ENCODE measurements at regions of chr1 and their contacts with region 1.

Region 1: DNA sequence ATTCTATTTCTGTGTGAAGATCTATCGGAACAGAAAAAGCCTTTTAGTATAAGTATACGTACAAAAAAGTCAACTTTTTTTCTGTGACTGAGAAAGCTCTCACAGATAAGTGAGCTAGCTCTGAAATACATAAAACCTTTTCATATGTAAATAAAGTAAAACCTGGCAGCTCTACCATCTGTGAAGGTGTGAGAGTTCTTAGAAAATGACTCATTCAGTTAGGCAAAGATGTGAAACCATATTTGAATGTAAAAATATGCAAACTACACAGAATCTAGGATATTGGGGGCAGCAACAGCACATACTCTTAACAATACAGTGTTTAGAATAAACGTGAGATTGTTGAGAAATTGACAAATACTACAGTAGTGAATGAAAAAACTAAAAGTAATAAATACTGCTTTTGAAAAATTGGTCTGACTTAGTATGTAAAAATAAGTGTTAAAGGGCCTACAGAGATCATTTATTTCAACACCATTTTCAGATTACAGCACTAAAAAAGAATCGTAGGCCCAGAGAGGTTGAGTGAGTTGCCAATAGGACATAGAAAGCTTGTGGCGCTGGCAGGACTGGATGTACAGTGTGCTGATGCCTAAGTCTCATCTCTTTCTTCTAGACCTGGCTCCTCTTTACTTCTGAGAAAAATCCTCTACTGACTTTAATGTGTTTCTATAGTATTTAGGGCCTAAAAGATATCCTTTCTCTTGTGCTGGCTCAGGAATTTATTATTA is 19.8 kb downstream of the ATP6V1G3 start:
- DNase-seq: peak in 3 of 14 experiments; percentile 44 to 74 (median 50)
- ATAC-seq: peak; percentile 52
- H3K4me3 ChIP-seq: peak overlapping the region; percentile 38
- H3K4me3 Mint-ChIP-seq: peak overlapping the region; percentile 79
- H3K27ac ChIP-seq: peak overlapping the region; percentile 48 to 60
- H3K27ac Mint-ChIP-seq: peak overlapping the region; percentile 93
- H3K4me1 ChIP-seq: peaks cover 20% of the 10 kb centered on the region
- H3K4me1 Mint-ChIP-seq: peaks cover 82% of the 10 kb centered on the region
- H3K27me3 ChIP-seq: no peaks in the 10 kb centered on the region
- H3K27me3 Mint-ChIP-seq: no peaks in the 10 kb centered on the region
- CTCF ChIP-seq: no peak

Region 2: GRCh38 chr1:198167436-198167934 is 353.2 kb before region 1 on chr1:
- CTCF ChIA-PET with region 1: no interaction called
- POLR2A ChIA-PET with region 1: no interaction called
- intact Hi-C with region 1: loop called in 1 of 2 experiments (anchors 10 kb)
- DNase-seq: peak in 5 of 14 experiments; percentile 16 to 85 (median 63)
- ATAC-seq: peak; percentile 48
- H3K4me3 ChIP-seq: peak overlapping the region; percentile 24
- H3K4me3 Mint-ChIP-seq: peak overlapping the region; percentile 74
- H3K27ac ChIP-seq: peak overlapping the region; percentile 57 to 79
- H3K27ac Mint-ChIP-seq: peak overlapping the region; percentile 88
- H3K4me1 ChIP-seq: peaks cover 64% of the 10 kb centered on the region
- H3K4me1 Mint-ChIP-seq: peaks cover 91% of the 10 kb centered on the region
- H3K27me3 ChIP-seq: no peaks in the 10 kb centered on the region
- H3K27me3 Mint-ChIP-seq: no peaks in the 10 kb centered on the region
- CTCF ChIP-seq: no peak

Region 3: GRCh38 chr1:198612471-198613260 is 92.0 kb after region 1 on chr1:
- CTCF ChIA-PET with region 1: no interaction called
- POLR2A ChIA-PET with region 1: interaction called, 10 read pairs
- intact Hi-C with region 1: no loop called
- DNase-seq: peak in 3 of 14 experiments; percentile 57 to 78 (median 60)
- ATAC-seq: peak; percentile 45
- H3K4me3 ChIP-seq: peak overlapping the region; percentile 28
- H3K4me3 Mint-ChIP-seq: peak overlapping the region; percentile 79
- H3K27ac ChIP-seq: peak overlapping the region; percentile 71
- H3K27ac Mint-ChIP-seq: peak overlapping the region; percentile 98
- H3K4me1 ChIP-seq: peaks cover 50% of the 10 kb centered on the region
- H3K4me1 Mint-ChIP-seq: peaks cover 70% of the 10 kb centered on the region
- H3K27me3 ChIP-seq: no peaks in the 10 kb centered on the region
- H3K27me3 Mint-ChIP-seq: no peaks in the 10 kb centered on the region
- CTCF ChIP-seq: no peak

Region 4: DNA sequence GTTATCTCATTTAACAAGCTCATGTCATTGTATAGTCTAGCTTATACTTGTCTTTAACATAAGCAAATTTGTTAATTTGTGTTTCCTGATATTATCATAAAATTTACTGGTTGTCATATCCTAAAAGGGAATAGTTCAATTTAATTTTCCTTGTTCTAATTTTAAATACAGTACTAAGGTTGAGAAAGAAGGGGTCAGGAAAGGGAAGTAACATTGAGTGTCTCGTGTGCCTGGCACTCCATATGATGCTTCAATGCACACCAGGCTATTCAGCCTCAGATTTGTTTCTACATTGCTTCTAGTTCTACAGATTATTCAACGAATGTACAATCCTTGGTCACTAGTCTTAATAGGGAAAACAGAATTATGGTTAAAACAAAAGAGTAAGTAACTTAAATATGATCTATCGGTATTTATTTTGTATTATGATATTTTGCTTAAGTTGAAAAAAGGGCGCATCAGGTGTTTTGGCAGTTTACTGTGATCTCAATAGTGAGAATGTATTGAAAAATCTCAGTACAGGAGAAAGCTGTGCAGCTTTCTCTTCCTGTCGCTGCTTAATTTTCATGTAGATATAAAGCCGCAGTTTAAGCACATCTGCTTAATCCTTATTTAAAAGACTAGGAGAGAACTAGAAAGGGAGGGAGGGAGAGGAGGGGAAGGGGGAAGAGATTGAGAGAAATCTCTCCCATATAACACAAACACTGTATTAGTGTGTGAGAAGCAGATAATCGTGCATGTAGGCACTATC is 131.1 kb after region 1 on chr1:
- CTCF ChIA-PET with region 1: no interaction called
- POLR2A ChIA-PET with region 1: interaction called, 26 read pairs
- intact Hi-C with region 1: no loop called
- DNase-seq: peak in 1 of 14 experiments; percentile 46
- ATAC-seq: no peak
- H3K4me3 ChIP-seq: peak overlapping the region; percentile 79
- H3K4me3 Mint-ChIP-seq: peak overlapping the region; percentile 83
- H3K27ac ChIP-seq: peak overlapping the region; percentile 81 to 85
- H3K27ac Mint-ChIP-seq: peak overlapping the region; percentile 90
- H3K4me1 ChIP-seq: peaks cover 24% of the 10 kb centered on the region
- H3K4me1 Mint-ChIP-seq: peaks cover 76% of the 10 kb centered on the region
- H3K27me3 ChIP-seq: no peaks in the 10 kb centered on the region
- H3K27me3 Mint-ChIP-seq: no peaks in the 10 kb centered on the region
- CTCF ChIP-seq: no peak

Region 5: GRCh38 chr1:198693321-198693720 is 172.6 kb after region 1 on chr1:
- CTCF ChIA-PET with region 1: interaction called, 3 read pairs
- POLR2A ChIA-PET with region 1: interaction called, 15 read pairs
- intact Hi-C with region 1: no loop called
- DNase-seq: no peak
- ATAC-seq: peak; percentile 48
- H3K4me3 ChIP-seq: no peak overlapping the region
- H3K4me3 Mint-ChIP-seq: peak overlapping the region; percentile 70
- H3K27ac ChIP-seq: no peak overlapping the region
- H3K27ac Mint-ChIP-seq: peak overlapping the region; percentile 82
- H3K4me1 ChIP-seq: peaks cover 17% of the 10 kb centered on the region
- H3K4me1 Mint-ChIP-seq: peaks cover 88% of the 10 kb centered on the region
- H3K27me3 ChIP-seq: no peaks in the 10 kb centered on the region
- H3K27me3 Mint-ChIP-seq: no peaks in the 10 kb centered on the region
- CTCF ChIP-seq: no peak

Region 6: DNA sequence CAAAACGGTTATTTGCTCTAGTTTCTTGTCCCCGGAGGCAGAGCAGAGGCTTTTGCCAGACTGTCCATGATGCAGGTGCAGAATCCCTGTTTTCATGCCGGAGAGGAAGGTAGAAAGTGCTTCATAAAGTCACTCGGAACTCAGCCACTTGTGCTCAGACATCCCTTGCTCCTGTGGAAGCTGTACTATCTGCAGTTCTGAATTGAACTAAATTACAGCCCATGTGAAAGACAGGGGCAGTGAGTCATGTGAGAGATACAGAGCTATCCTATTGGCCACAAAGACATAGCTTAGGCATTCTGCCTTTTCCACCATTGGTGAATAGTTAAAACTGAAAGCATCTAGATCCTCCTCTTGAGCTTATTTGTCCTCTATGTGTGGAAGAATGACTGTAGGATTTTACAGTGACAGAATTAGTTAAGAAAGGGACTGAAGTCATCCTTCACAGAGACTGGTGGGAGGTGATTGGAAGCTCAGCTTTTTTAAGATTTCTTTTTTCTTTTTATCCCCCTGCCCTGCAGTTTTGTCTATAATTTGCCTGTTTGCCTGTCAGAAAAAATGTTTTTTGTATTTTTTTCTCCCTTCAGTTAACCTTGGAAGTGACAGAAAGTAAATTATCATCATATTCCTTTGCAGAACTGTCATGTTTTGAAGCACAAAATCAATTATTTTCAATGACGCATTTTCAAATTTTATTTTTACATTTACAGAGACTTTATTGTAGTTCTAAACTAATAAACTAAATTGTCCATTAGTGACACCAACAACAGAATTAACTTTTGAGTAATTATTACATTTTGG is 416.7 kb after region 1 on chr1:
- CTCF ChIA-PET with region 1: no interaction called
- POLR2A ChIA-PET with region 1: no interaction called
- intact Hi-C with region 1: loop called in 1 of 2 experiments (anchors 10 kb)
- DNase-seq: peak in 10 of 14 experiments; percentile 9 to 87 (median 25)
- ATAC-seq: peak; percentile 83
- H3K4me3 ChIP-seq: peak overlapping the region; percentile 69
- H3K4me3 Mint-ChIP-seq: peak overlapping the region; percentile 90
- H3K27ac ChIP-seq: peak overlapping the region; percentile 39 to 58
- H3K27ac Mint-ChIP-seq: no peak overlapping the region
- H3K4me1 ChIP-seq: peaks cover 8% of the 10 kb centered on the region
- H3K4me1 Mint-ChIP-seq: peaks cover 26% of the 10 kb centered on the region
- H3K27me3 ChIP-seq: no peaks in the 10 kb centered on the region
- H3K27me3 Mint-ChIP-seq: no peaks in the 10 kb centered on the region
- CTCF ChIP-seq: no peak

Region 7: DNA sequence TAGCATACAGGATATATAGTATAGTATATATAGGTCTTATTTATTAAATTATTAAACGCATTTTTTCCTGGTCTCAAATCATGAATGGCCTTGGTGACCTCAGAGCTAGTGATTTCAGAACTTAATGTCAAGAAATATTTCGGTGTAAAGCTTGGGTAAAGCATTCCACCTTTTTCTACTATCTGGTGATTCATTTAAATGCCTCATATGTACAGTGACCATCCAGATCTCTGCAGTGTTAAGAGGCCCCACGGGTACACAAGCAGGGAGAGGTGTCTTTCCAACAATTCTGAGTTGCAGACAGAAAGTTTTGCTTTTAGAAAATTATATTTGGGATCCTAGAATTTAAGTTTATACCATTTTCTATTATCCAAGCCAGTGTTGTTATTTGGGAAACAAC is 744.6 kb after region 1 on chr1:
- CTCF ChIA-PET with region 1: no interaction called
- POLR2A ChIA-PET with region 1: no interaction called
- intact Hi-C with region 1: no loop called
- DNase-seq: no peak
- ATAC-seq: no peak
- H3K4me3 ChIP-seq: no peak overlapping the region
- H3K4me3 Mint-ChIP-seq: no peak overlapping the region
- H3K27ac ChIP-seq: no peak overlapping the region
- H3K27ac Mint-ChIP-seq: no peak overlapping the region
- H3K4me1 ChIP-seq: no peaks in the 10 kb centered on the region
- H3K4me1 Mint-ChIP-seq: no peaks in the 10 kb centered on the region
- H3K27me3 ChIP-seq: no peaks in the 10 kb centered on the region
- H3K27me3 Mint-ChIP-seq: no peaks in the 10 kb centered on the region
- CTCF ChIP-seq: no peak